ENCODE measurements at regions of chr9 and their contacts with region 1.

Region 1: DNA sequence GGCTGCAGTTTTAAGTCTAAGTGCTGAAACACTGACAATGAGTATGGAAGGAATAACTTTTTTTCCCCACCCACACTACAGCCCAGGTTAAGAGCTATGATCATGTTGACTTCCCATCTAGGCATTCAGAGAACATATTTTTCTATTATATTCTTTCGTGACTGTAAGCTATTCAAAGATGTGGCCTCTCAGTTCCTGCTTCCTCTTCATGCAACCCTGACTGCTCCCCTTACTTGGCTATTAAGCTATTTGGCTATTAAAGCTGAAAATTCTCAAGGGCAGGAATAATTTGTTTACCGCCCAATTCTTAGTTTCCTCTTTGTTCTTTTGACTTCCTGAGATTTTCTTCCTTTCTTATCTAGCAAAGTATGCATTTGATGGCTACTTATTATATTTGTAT is 18.6 kb upstream of the ALDH1A1 start:
- DNase-seq: no peak
- ATAC-seq: no peak
- H3K4me3 ChIP-seq: no peak overlapping the region
- H3K27ac ChIP-seq: no peak overlapping the region
- H3K4me1 ChIP-seq: no peaks in the 10 kb centered on the region
- H3K27me3 ChIP-seq: no peaks in the 10 kb centered on the region
- CTCF ChIP-seq: no peak
- EP300 ChIP-seq: no peak
- POLR2A ChIP-seq: no peak
- RAD21 ChIP-seq: no peak

Region 2: GRCh38 chr9:72753266-72753893 is 218.0 kb before region 1 on chr9:
- CTCF ChIA-PET with region 1: no interaction called
- POLR2A ChIA-PET with region 1: interaction called, 10 read pairs
- RAD21 ChIA-PET with region 1: no interaction called
- SMC1A ChIA-PET with region 1: no interaction called
- in situ Hi-C with region 1: no loop called
- intact Hi-C with region 1: no loop called
- DNase-seq: no peak
- ATAC-seq: no peak
- H3K4me3 ChIP-seq: no peak overlapping the region
- H3K27ac ChIP-seq: no peak overlapping the region
- H3K4me1 ChIP-seq: no peaks in the 10 kb centered on the region
- H3K27me3 ChIP-seq: no peaks in the 10 kb centered on the region; a peak in 1 of 4 replicates
- CTCF ChIP-seq: peak in 1 of 3 experiments; percentile 37; a peak in 1 of 6 replicates
- EP300 ChIP-seq: no peak
- POLR2A ChIP-seq: no peak
- RAD21 ChIP-seq: peak; percentile 61